Right cardiac atrium (tissue), 5 donors: ENCODE measurements at regions of chr13 and their contacts with region 1.

Region 1: GRCh38 chr13:107211073-107211472 is 643.1 kb upstream of the ARGLU1 start:
- DNase-seq: peak; percentile 71 to 89 (median 81)
- ATAC-seq: peak; percentile 91 to 94
- H3K4me3 ChIP-seq: no peak overlapping the region
- H3K27ac ChIP-seq: no peak overlapping the region
- H3K4me1 ChIP-seq: no peaks in the 10 kb centered on the region
- H3K27me3 ChIP-seq: no peaks in the 10 kb centered on the region

Region 2: GRCh38 chr13:107650081-107650701 is 439.1 kb after region 1 on chr13:
- intact Hi-C with region 1: loop called in 1 of 4 experiments (anchors 5 kb)
- DNase-seq: peak; percentile 53 to 82 (median 78)
- ATAC-seq: peak in 1 of 2 donors; percentile 70
- H3K4me3 ChIP-seq: no peak overlapping the region
- H3K27ac ChIP-seq: no peak overlapping the region
- H3K4me1 ChIP-seq: no peaks in the 10 kb centered on the region
- H3K27me3 ChIP-seq: no peaks in the 10 kb centered on the region

Region 3: GRCh38 chr13:108155185-108156106 is 944.4 kb after region 1 on chr13:
- intact Hi-C with region 1: loop called in 3 of 4 experiments (anchors 5 to 10 kb)
- DNase-seq: peak; percentile 35 to 75 (median 65)
- ATAC-seq: no peak
- H3K4me3 ChIP-seq: no peak overlapping the region
- H3K27ac ChIP-seq: no peak overlapping the region
- H3K4me1 ChIP-seq: no peaks in the 10 kb centered on the region
- H3K27me3 ChIP-seq: no peaks in the 10 kb centered on the region